Esophagus squamous epithelium (tissue), 5 donors: ENCODE measurements at regions of chr7 and their contacts with region 1.

Region 1: DNA sequence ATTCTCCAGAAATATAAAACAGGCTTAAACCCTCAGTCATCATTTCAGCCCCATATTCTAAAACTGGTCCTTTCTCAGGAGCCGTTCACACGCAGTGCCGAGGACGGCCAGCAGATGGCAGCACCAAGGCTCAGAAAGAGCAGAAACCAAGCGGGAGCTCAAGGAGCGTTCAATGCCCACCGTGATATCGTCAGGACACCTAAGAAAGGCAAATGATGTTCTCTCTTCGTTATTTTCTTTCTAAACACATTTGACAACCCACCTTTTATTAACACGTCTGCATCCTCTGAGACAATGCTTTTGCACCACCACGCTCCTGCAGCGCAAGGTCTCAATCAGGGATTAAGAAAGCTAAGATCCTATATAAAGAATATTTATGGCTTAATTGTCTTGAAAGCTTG is 45.7 kb upstream of the RBM33 start:
- DNase-seq: no peak
- H3K4me3 ChIP-seq: no peak overlapping the region
- H3K27ac ChIP-seq: no peak overlapping the region
- H3K4me1 ChIP-seq: peaks cover 0 to 3% (median 0%) of the 10 kb centered on the region in 3 donors
- H3K27me3 ChIP-seq: peaks cover 0 to 54% (median 0%) of the 10 kb centered on the region in 4 donors
- CTCF ChIP-seq: peak; percentile 91 to 98 (median 95)
- POLR2A ChIP-seq: no peak

Region 2: DNA sequence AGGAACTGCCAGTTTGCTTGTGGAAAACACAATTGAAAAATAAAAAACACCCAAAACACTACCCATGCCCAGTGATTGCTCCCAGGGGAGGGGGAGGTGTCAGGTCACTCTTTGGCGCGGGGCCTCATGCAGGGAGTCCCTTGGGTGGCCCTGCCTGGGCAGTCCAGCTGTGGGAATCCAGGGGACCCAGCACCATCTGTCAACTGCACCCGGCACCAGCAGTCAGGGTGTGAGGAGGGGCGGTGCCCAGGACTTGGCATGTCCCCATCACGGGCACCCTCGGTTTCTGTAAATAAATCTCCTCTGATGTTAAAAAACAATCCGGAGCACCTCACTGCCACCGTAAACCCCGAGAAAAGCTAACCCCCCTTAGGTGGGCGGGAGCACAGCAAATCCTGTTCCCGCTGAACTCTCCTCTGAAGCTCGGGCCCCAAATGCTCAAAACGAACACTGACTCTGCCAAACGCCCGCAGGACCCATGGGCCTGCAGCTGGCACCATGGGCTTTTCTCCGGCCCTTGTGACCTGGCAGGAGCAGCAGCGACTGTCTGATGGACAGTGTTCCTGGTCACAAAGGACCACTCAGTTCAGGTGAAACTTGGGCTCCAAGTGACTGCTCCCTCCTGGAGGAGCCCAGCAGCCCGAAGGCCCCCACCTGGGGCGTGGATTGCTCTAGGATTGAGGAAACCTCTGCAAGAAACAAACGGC is 159.3 kb before region 1 on chr7:
- intact Hi-C with region 1: no loop called
- DNase-seq: no peak
- H3K4me3 ChIP-seq: no peak overlapping the region
- H3K27ac ChIP-seq: no peak overlapping the region
- H3K4me1 ChIP-seq: no peaks in the 10 kb centered on the region
- H3K27me3 ChIP-seq: peaks cover 0 to 90% (median 3%) of the 10 kb centered on the region in 4 donors
- CTCF ChIP-seq: no peak
- POLR2A ChIP-seq: no peak

Region 3: DNA sequence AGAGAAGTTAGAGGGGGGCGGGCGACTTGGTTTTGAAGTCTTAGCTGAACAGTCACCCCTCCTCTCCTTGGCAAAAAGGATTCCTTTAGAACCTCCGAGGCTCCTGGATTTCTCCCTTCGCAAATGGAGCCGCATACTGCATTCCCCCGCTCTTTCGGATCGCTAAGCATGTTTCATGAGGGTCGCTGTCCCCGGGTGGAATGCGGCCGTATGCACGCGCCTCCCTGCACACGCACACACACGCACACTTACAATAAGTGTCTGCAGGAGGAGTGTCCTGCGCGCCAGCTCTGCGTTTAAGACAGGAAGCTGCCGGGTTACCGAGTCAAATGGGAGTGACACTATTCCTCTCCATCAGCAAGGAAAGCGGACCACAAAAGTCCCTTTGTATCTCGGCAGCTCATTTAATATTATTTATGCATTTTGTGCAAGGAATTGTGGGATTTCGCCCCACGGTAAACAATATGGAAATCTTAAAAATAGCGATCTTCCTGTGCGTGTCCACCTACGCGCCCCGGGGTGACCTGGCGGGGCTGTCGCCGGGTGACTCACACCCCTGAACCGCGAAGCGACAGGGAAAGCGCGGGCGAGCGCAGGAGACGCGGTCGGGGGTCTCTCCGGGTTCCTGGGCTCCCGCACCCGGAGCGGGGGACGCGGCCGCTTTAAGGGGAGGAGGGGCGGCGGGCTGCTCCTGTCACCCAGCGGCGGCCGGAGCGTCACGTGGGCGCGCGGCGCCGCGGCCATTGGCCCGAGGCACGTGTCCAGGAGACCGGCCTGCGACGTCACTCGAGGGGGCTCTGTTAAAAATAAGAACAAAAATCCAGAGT is 141.9 kb before region 1 on chr7:
- intact Hi-C with region 1: no loop called
- DNase-seq: no peak
- H3K4me3 ChIP-seq: peak overlapping the region; percentile 26 to 60 (median 42)
- H3K27ac ChIP-seq: no peak overlapping the region
- H3K4me1 ChIP-seq: peaks cover 29 to 56% (median 39%) of the 10 kb centered on the region in 3 donors
- H3K27me3 ChIP-seq: peaks cover 75 to 98% (median 82%) of the 10 kb centered on the region in 4 donors
- CTCF ChIP-seq: no peak
- POLR2A ChIP-seq: no peak

Region 4: DNA sequence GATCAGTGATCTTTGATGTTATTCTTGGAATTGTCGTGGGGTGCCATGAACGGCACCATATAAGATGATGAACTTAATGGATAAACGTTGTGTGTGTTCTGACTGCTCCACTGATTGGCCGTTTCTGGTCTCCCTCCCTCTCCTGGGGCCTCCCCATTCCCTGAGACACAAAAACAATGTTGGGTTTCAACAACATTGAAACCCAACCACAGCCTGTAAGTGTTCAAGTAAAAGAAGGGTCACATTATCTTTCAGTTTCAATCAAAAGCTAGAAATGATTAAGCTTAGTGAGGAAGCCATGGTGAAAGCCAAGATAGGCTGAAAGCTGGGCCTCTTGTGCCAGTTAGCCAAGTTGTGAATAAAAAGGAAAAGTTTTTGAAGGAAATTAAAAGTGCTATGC is 121.3 kb before region 1 on chr7:
- intact Hi-C with region 1: no loop called
- DNase-seq: no peak
- H3K4me3 ChIP-seq: no peak overlapping the region
- H3K27ac ChIP-seq: no peak overlapping the region
- H3K4me1 ChIP-seq: peaks cover 0 to 5% (median 0%) of the 10 kb centered on the region in 3 donors
- H3K27me3 ChIP-seq: peaks cover 0 to 100% (median 8%) of the 10 kb centered on the region in 4 donors
- CTCF ChIP-seq: no peak
- POLR2A ChIP-seq: no peak

Region 5: GRCh38 chr7:155533827-155534690 is 64.8 kb before region 1 on chr7:
- intact Hi-C with region 1: no loop called
- DNase-seq: no peak
- H3K4me3 ChIP-seq: peak overlapping the region in 2 of 4 donors; percentile 22 to 48
- H3K27ac ChIP-seq: no peak overlapping the region
- H3K4me1 ChIP-seq: peaks cover 0 to 23% (median 7%) of the 10 kb centered on the region in 3 donors
- H3K27me3 ChIP-seq: peaks cover 10 to 98% (median 17%) of the 10 kb centered on the region in 4 donors
- CTCF ChIP-seq: peak in 3 of 6 experiments; percentile 17 to 35 (median 18)
- POLR2A ChIP-seq: no peak

Region 6: DNA sequence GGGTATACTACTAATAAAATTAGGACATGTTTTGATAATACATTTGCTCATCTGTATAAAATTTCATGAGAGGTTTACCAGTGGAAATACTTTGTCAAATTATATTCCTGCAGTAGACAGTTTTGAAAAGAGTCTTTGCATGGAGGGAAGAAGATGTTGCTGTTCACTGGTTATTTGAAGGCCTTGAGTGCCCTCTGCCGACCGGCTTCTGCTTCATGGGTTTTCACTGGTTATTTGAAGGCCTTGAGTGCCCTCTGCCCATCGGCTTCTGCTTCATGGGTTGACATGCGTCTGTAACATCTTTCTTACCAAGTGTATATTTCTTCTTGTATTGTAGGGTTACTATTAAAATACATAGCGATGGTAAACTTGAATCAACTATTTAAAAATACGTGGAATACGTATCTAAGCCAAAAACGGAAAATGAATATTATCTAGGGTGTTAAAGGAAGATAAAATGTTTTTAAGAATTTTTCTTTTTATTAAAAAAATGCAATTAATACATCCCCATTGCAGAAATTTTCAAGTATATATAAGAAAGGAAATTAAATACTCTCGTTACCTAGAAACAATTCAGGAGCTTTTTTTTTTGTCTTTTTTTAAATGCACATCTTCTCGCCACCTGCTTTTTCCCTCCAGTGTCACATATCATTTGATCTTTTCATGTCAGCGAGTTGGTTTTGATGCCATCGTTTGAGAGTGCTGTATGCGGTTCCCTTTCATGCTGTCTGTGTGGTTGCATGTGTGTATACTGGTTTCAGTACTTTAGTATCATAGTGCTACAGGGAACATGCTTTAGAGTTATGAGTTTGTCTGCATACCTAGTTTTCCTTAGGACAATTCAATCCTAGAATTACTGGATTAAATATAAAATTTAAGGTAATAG is 140.1 kb after region 1 on chr7:
- intact Hi-C with region 1: loop called (anchors 10 kb)
- DNase-seq: no peak
- H3K4me3 ChIP-seq: no peak overlapping the region
- H3K27ac ChIP-seq: no peak overlapping the region
- H3K4me1 ChIP-seq: peaks cover 0 to 9% (median 0%) of the 10 kb centered on the region in 3 donors
- H3K27me3 ChIP-seq: no peaks in the 10 kb centered on the region
- CTCF ChIP-seq: peak; percentile 15 to 66 (median 52)
- POLR2A ChIP-seq: no peak

Region 7: GRCh38 chr7:155769701-155770100 is 170.9 kb after region 1 on chr7:
- intact Hi-C with region 1: loop called (anchors 10 kb)
- DNase-seq: no peak
- H3K4me3 ChIP-seq: no peak overlapping the region
- H3K27ac ChIP-seq: no peak overlapping the region
- H3K4me1 ChIP-seq: peaks cover 0 to 9% (median 0%) of the 10 kb centered on the region in 3 donors
- H3K27me3 ChIP-seq: no peaks in the 10 kb centered on the region
- CTCF ChIP-seq: no peak
- POLR2A ChIP-seq: no peak